Activated CD8-positive, alpha-beta T cell treated with anti-CD3 and anti-CD28 coated beads, Interleukin-2, amount 10 ng/mL, durations not matched to agents 7 days and 5 days (primary cell): ENCODE measurements at regions of chr6 and their contacts with region 1.

Region 1: DNA sequence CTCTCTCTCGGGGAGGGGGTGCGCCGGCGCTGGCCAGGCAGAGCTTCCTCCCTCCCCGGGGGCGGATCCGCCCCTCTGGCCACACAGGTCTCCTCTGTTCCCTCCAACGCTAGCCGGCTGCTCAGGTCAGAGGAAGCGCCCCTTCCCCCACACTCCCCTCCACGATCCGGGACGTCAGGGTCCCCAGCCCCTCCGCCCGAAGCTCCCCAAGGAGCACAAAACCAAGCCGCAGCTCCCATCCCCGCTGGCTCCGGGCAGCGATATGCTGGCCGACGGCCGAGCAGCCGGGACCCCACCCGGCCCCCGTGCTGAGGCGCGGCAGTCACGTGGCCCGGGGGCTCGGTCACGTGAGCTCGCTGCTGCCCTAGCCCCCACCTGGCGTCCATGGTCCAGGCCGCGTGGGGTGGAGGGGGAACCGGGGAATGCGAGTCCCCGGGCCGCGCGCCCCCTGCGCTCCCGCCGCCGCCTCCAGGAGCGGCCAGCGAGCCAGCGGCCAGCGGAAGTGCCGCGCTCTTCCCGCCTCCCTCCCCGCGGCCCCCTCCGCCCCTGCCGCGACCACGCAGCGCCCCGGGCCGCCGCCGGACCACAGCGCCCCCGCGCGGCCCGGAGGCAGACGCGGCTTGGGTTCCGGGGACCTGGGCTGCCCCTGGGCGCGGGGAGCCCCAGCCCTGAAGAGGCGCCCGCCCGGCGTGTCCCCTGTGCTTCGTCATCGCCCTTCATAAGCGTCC is at the start of gene SLC35B2:
- DNase-seq: peak; percentile 72
- ATAC-seq: peak; percentile 60
- H3K4me3 Mint-ChIP-seq: peak within 1 kb of the TSS; percentile 85
- H3K27ac Mint-ChIP-seq: peak within 1 kb of the TSS; percentile 91
- H3K4me1 Mint-ChIP-seq: peaks cover 57% of the 10 kb centered on the region
- H3K27me3 Mint-ChIP-seq: no peaks in the 10 kb centered on the region
- total RNA-seq, gene SLC35B2: 31.6 to 32.8 TPM

Region 2: DNA sequence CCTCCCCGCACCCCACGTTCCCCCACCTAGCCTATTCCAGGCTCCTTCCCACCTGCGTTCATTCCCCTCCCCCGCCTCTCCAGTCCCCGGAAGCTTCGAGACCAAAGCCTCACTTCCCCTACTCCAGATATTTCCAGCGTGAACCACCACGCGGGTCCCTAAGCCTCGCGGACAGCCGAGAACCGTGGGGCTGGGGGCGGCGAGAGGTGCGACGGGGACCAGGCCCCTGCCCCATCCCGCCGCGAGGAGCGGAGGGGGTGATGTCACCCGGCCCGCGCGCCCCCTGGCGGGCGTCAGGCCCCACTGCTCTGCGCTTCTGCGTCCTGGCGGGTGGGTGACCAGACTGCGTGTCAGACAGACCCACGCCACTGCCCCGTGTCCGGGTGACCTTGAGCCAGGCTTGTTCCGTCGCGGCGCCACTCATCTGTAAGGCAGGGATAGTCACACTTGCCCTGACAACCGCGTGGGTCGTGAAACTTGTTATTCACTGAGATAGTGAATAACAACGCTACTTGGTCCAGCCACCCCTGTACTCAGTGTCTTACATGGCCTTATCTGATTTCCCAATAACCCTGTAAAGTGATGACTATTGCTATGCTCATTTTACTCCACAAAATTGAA is 19.3 kb before region 1 on chr6:
- CTCF ChIA-PET with region 1: interaction called, 75 read pairs
- POLR2A ChIA-PET with region 1: interaction called, 5 read pairs
- DNase-seq: peak; percentile 81
- ATAC-seq: peak; percentile 97
- H3K4me3 Mint-ChIP-seq: peak overlapping the region; percentile 80
- H3K27ac Mint-ChIP-seq: peak overlapping the region; percentile 94
- H3K4me1 Mint-ChIP-seq: peaks cover 32% of the 10 kb centered on the region
- H3K27me3 Mint-ChIP-seq: no peaks in the 10 kb centered on the region

Region 3: DNA sequence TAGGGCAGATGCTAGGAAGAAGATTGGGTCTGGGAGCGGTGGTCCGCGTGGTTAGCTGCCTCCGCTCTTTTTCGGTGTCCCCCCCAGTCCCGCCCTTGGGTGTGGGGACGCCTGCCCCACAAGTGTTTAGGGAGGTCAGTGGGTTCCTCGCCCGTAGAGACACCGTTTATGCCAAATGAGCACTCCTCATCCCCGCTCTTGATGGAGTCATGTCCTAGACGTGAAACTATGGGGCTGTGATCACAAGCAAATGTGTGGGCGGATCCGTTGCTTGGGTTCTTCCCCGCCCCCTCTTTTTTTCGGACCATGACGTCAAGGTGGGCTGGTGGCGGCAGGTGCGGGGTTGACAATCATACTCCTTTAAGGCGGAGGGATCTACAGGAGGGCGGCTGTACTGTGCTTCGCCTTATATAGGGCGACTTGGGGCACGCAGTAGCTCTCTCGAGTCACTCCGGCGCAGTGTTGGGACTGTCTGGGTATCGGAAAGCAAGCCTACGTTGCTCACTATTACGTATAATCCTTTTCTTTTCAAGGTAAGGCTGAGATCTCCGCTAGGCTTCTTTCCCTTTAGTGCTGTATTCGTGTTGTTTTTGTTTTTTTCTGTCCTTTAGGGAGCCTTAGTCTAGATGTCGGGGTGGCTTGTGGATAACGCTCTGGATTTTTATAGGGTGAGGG is 10.4 kb before region 1 on chr6 and contains the start of gene HSP90AB1:
- CTCF ChIA-PET with region 1: interaction called, 75 read pairs
- POLR2A ChIA-PET with region 1: interaction called, 104 read pairs
- DNase-seq: peak; percentile 97
- ATAC-seq: peak; percentile 80
- H3K4me3 Mint-ChIP-seq: peak within 1 kb of the TSS; percentile 98
- H3K27ac Mint-ChIP-seq: peak within 1 kb of the TSS; percentile 99
- H3K4me1 Mint-ChIP-seq: peaks cover 44% of the 10 kb centered on the region
- H3K27me3 Mint-ChIP-seq: no peaks in the 10 kb centered on the region
- total RNA-seq, gene HSP90AB1: 741 to 755 TPM